PC-3 (cell line): ENCODE measurements at regions of chr19 and their contacts with region 1.

Region 1: DNA sequence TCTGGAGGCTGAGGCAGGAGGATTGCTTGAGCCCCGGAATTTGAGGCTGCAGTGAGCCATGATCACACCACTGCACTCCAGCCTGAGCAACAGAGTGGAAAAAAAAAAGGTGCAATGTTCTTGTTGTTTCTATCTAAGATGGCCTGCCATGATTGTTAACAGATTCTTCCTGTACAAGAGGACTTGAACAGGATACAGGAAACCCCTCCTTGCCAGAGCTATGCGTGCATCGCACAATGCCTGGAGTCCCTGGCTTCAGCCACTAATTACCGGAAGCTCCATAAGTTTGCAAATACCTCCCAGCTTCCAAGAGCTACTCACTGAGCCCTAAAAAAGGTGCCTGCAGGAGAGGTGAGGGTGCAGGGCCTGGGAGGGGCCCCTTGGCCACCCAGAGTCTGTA is 13.1 kb upstream of the HIF3A start:
- DNase-seq: no peak
- ATAC-seq: no peak
- H3K4me3 ChIP-seq: no peak overlapping the region
- H3K27ac ChIP-seq: no peak overlapping the region
- H3K4me1 ChIP-seq: peaks cover under 1% of the 10 kb centered on the region
- H3K27me3 ChIP-seq: no peaks in the 10 kb centered on the region
- CTCF ChIP-seq: no peak

Region 2: DNA sequence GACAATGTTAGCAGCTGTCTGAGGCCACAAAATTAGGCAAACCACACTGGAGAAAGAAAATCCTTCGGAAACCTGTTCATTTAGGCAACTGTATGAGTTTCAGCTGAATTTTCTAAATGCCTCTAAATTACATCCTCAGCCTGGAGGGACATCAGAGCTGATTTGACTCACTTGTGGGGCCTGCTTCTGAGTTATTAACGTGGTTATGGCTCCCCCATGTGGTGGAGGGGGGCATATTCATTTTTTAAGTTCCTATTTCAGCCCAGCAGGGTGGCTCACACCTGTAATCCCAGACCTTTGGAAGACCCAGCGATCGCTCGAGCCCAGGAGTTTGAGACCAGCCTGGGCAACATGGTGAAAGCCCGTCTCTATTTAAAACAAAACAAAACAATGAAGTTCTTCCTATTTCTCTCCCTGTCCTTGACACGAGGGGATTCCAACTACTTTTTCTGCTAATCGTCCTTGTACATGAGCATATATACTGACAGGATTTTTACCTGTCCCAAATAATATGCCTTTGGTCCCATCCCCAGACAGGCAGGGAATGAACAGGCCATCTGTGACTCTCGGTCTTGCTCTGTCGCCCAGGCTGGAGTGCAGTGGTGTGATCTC is 18.4 kb before region 1 on chr19:
- CTCF ChIA-PET with region 1: no interaction called
- POLR2A ChIA-PET with region 1: no interaction called
- intact Hi-C with region 1: no loop called
- DNase-seq: peak; percentile 75
- ATAC-seq: peak; percentile 83
- H3K4me3 ChIP-seq: no peak overlapping the region
- H3K27ac ChIP-seq: no peak overlapping the region
- H3K4me1 ChIP-seq: peaks cover 8% of the 10 kb centered on the region
- H3K27me3 ChIP-seq: no peaks in the 10 kb centered on the region
- CTCF ChIP-seq: peak; percentile 77

Region 3: GRCh38 chr19:46373421-46374359 is 89.9 kb after region 1 on chr19:
- CTCF ChIA-PET with region 1: interaction called, 6 read pairs
- POLR2A ChIA-PET with region 1: no interaction called
- intact Hi-C with region 1: loop called (anchors 5 kb)
- DNase-seq: peak; percentile 95
- ATAC-seq: peak; percentile 75
- H3K4me3 ChIP-seq: peak overlapping the region; percentile 53
- H3K27ac ChIP-seq: peak overlapping the region; percentile 99
- H3K4me1 ChIP-seq: peaks cover 52% of the 10 kb centered on the region
- H3K27me3 ChIP-seq: no peaks in the 10 kb centered on the region
- CTCF ChIP-seq: peak; percentile 22; the same call in 1 of the 2 replicates

Region 4: DNA sequence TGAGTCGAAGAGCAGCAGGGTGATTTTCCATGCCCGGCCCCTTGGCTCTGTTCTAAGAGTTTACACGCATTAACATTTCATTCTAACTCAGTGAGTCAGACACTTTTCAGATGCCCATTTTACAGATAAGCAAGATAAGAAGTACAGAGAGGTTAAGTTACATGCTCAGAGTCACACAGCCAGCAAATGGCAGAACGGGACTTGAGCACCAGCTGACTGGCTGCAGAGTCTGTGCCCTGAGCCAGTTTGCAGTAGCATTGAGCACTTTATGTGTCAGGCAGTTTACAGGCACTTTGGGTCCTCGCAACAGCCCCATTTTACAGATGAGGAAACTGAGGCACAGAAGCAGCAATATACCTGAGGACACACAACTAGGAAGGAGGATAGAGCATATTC is 110.6 kb after region 1 on chr19:
- CTCF ChIA-PET with region 1: no interaction called
- POLR2A ChIA-PET with region 1: no interaction called
- intact Hi-C with region 1: loop called (anchors 2 kb)
- DNase-seq: no peak
- ATAC-seq: no peak
- H3K4me3 ChIP-seq: no peak overlapping the region
- H3K27ac ChIP-seq: no peak overlapping the region
- H3K4me1 ChIP-seq: no peaks in the 10 kb centered on the region
- H3K27me3 ChIP-seq: no peaks in the 10 kb centered on the region
- CTCF ChIP-seq: no peak

Region 5: DNA sequence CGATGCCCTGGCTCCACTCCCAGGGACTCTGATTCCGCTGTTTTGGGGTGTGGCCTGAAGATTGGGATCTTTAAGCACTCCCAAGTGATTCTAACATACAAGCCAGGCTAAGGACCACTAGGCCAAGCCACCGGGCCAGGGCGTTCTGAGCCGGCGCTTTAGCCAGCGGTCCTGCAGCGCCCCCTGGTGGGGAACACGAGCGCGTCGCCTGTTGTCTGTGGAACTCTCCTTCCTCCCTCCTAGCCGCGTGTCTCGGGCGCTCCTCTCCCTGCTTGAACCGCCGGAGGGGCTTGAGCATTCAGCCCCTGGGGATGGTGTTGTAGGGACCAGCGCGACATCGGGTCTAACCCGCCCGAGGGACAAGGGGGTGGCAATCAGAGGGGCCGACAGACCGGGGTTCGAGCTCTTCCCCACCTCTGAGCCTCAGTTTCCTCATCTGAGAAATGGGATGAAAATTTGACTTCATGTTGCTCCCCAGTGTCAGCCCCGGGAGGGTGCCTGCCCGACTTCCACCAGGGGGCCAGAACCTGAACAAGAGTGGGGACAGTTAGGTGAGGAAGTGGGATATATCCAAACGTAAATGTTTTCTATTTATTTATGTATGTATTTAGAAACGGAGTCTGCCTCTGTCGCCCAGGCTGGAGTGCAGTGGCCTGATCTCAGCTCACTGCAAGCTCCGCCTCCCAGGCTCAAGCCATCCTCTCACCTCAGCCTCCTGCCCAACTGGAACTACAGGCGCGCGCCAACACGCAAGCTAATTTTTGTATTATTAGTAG is 229.9 kb after region 1 on chr19:
- CTCF ChIA-PET with region 1: no interaction called
- POLR2A ChIA-PET with region 1: no interaction called
- intact Hi-C with region 1: loop called (anchors 2 kb)
- DNase-seq: peak; percentile 68
- ATAC-seq: peak; percentile 85
- H3K4me3 ChIP-seq: no peak overlapping the region
- H3K27ac ChIP-seq: no peak overlapping the region
- H3K4me1 ChIP-seq: no peaks in the 10 kb centered on the region
- H3K27me3 ChIP-seq: no peaks in the 10 kb centered on the region
- CTCF ChIP-seq: peak; percentile 83